ENCODE measurements at regions of chr4 and their contacts with region 1.

Region 1: GRCh38 chr4:169612871-169613859 is 782 bp upstream of the NEK1 start:
- DNase-seq: peak; percentile 47 to 87 (median 66)
- ATAC-seq: peak; percentile 47
- H3K4me3 ChIP-seq: peak overlapping the region; percentile 83
- H3K4me3 Mint-ChIP-seq: peak overlapping the region; percentile 98
- H3K27ac ChIP-seq: peak overlapping the region; percentile 98
- H3K27ac Mint-ChIP-seq: peak overlapping the region; percentile 100
- H3K4me1 ChIP-seq: peaks cover 17% of the 10 kb centered on the region
- H3K4me1 Mint-ChIP-seq: peaks cover 46% of the 10 kb centered on the region
- H3K27me3 ChIP-seq: no peaks in the 10 kb centered on the region
- H3K27me3 Mint-ChIP-seq: no peaks in the 10 kb centered on the region
- CTCF ChIP-seq: peak; percentile 90

Region 2: GRCh38 chr4:169707958-169708643 is 94.9 kb after region 1 on chr4:
- CTCF ChIA-PET with region 1: interaction called, 19 read pairs
- POLR2A ChIA-PET with region 1: no interaction called
- intact Hi-C with region 1: no loop called
- DNase-seq: no peak
- ATAC-seq: no peak
- H3K4me3 ChIP-seq: no peak overlapping the region
- H3K4me3 Mint-ChIP-seq: no peak overlapping the region
- H3K27ac ChIP-seq: no peak overlapping the region
- H3K27ac Mint-ChIP-seq: no peak overlapping the region
- H3K4me1 ChIP-seq: no peaks in the 10 kb centered on the region
- H3K4me1 Mint-ChIP-seq: no peaks in the 10 kb centered on the region
- H3K27me3 ChIP-seq: no peaks in the 10 kb centered on the region
- H3K27me3 Mint-ChIP-seq: no peaks in the 10 kb centered on the region
- CTCF ChIP-seq: no peak

Region 3: DNA sequence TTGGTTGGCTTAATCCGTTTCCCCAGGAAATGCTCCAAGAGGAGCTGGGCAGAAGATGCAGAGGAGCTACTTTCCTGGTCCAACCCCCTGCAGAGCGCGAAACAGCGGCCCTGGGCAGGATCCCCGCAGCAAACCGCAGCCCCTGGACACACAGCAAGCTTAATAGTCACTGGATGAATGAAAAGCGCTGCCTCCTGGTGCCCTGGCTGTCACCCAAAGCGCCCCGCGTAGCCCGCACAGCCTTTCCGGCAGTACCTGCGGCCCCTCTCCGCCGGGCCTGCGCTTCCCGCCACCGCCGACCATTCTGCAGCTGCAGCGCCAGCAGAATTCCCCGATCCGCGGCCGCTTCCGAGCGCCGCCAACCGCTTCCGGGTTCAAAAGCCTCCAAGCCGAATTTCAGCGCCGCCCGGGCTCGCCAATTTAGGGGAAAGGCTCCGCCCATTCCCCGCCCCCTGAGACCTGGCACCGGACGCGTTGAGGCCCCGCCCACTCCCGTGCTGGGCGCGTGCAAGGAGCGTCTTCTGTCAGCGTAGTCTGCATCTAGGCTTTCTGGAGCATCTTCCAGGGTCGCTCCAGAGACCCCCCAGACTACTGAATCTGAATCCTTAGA is 144.5 kb after region 1 on chr4 and contains the start of gene HPF1:
- CTCF ChIA-PET with region 1: interaction called, 3 read pairs
- POLR2A ChIA-PET with region 1: interaction called, 6 read pairs
- intact Hi-C with region 1: loop called (anchors 2 kb)
- DNase-seq: peak; percentile 83 to 99 (median 92)
- ATAC-seq: peak; percentile 97
- H3K4me3 ChIP-seq: peak within 1 kb of the TSS; percentile 83
- H3K4me3 Mint-ChIP-seq: peak within 1 kb of the TSS; percentile 85
- H3K27ac ChIP-seq: peak within 1 kb of the TSS; percentile 23 to 29
- H3K27ac Mint-ChIP-seq: peak within 1 kb of the TSS; percentile 26
- H3K4me1 ChIP-seq: peaks cover 17% of the 10 kb centered on the region
- H3K4me1 Mint-ChIP-seq: peaks cover 33% of the 10 kb centered on the region
- H3K27me3 ChIP-seq: no peaks in the 10 kb centered on the region
- H3K27me3 Mint-ChIP-seq: no peaks in the 10 kb centered on the region
- CTCF ChIP-seq: no peak
- total RNA-seq, gene HPF1: 4.4 to 4.8 TPM

Region 4: GRCh38 chr4:170027181-170027829 is 414.1 kb after region 1 on chr4:
- CTCF ChIA-PET with region 1: interaction called, 4 read pairs
- POLR2A ChIA-PET with region 1: interaction called, 4 read pairs
- intact Hi-C with region 1: loop called (anchors 2 kb)
- DNase-seq: peak; percentile 74 to 95 (median 86)
- ATAC-seq: peak; percentile 77
- H3K4me3 ChIP-seq: peak overlapping the region; percentile 87
- H3K4me3 Mint-ChIP-seq: peak overlapping the region; percentile 94
- H3K27ac ChIP-seq: no peak overlapping the region
- H3K27ac Mint-ChIP-seq: peak overlapping the region; percentile 70
- H3K4me1 ChIP-seq: peaks cover 19% of the 10 kb centered on the region
- H3K4me1 Mint-ChIP-seq: peaks cover 9% of the 10 kb centered on the region
- H3K27me3 ChIP-seq: peaks cover 0 to 14% of the 10 kb centered on the region in 2 experiments
- H3K27me3 Mint-ChIP-seq: peaks cover 22% of the 10 kb centered on the region
- CTCF ChIP-seq: no peak

Measured in CD4-positive, alpha-beta T cell (primary cell).